AG04449 (cell line): ENCODE measurements at regions of chr9 and their contacts with region 1.

Region 1: DNA sequence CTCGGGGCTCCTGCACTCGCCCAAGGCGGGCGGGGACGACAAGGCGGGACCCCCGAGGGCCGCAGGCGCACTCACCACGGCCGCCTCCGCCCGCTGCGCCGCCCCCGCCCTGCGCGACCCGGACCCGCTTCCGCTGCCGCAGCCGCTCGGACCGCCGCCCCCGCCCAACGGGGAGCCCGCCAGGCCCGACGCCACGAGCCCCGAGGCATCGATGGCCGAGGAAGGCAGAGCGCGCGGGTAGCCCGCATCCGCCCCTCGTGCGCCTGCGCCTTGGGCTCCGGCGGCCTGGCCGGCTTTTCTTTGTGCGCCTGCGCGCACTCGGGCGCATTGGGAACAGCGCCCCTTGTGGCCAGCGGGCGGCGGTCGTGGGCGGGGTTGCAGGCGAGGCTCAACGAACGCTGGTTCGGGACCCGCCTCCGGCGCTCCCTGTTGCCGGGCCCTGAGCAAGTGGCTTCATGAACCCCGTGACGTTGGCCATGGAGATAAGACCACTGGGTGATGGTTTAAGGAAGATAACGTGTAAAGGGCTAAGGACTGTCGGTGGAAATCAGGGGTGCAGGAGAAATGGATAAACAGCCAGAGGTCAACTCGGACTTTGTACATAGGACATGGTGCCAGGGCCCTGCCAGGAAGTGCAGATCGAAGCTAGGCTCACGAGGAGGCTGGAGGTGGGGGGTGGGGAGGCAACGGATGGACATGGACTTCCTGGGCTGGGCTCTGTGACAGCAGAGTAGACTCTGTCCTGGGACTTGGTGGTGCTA is at the starts of genes C8G and FBXW5:
- DNase-seq: peak; percentile 14
- H3K4me3 ChIP-seq: peak within 1 kb of the TSS; percentile 81
- CTCF ChIP-seq: peak; percentile 96

Region 2: GRCh38 chr9:136605988-136606660 is 338.6 kb before region 1 on chr9:
- CTCF ChIA-PET with region 1: no interaction called
- POLR2A ChIA-PET with region 1: no interaction called
- DNase-seq: no peak
- H3K4me3 ChIP-seq: no peak overlapping the region
- CTCF ChIP-seq: no peak

Region 3: DNA sequence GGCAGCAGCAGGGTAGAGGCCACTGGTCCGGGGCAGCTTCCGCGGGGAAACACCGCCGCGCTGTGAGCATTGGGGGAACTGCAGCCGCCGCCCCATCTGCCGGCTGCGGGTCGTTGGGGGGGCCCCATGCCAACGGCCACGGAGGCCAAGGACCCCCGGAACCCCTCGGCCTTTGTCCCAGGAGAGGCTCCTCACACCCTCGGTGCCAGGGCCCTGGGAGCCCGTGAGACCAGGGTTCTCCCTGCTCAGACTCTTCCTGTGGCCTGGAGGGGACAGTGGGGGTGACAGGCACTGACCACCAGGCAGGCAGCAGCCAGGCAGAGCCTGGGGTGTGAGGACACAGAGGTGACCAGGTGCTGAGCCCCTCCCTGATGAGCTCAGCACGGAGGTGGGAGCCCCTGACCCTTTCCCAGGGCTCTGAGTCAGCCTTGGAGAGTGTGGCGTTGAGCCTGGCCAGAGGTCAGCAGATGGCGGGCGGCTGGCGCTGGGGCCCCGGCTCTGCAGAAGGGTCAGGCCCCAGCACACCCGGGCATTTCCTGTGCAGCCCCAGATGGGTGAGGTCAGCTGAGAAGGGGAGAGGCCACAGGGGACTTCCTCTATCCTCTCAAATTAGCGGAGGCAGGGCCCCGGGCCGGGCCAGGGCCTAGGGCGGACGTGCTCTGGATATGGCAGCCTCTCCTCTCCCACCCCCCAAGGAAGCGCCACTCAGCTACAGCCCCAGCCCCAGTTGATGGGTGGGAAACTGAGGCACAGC is 299.9 kb before region 1 on chr9:
- CTCF ChIA-PET with region 1: no interaction called
- POLR2A ChIA-PET with region 1: no interaction called
- DNase-seq: no peak
- H3K4me3 ChIP-seq: no peak overlapping the region
- CTCF ChIP-seq: peak; percentile 93

Region 4: GRCh38 chr9:136961279-136962065 is 16.8 kb after region 1 on chr9:
- CTCF ChIA-PET with region 1: interaction called, 16 read pairs
- POLR2A ChIA-PET with region 1: no interaction called
- DNase-seq: no peak
- H3K4me3 ChIP-seq: no peak overlapping the region
- CTCF ChIP-seq: no peak

Region 5: GRCh38 chr9:137064027-137064879 is 119.6 kb after region 1 on chr9:
- CTCF ChIA-PET with region 1: interaction called, 18 read pairs
- POLR2A ChIA-PET with region 1: no interaction called
- DNase-seq: no peak
- H3K4me3 ChIP-seq: no peak overlapping the region
- CTCF ChIP-seq: peak; percentile 98